ENCODE measurements at regions of chr17 and their contacts with region 1.

Region 1: GRCh38 chr17:49910094-49910857 is 58.7 kb upstream of the DLX4 start:
- DNase-seq: no peak
- ATAC-seq: peak; percentile 75
- H3K4me3 ChIP-seq: peak overlapping the region; percentile 38 to 46
- H3K27ac ChIP-seq: no peak overlapping the region
- H3K4me1 ChIP-seq: peaks cover 24% of the 10 kb centered on the region
- H3K27me3 ChIP-seq: 0 out of 2 replicates have a peak, but pooled peaks cover 2% of the 10 kb centered on the region
- CTCF ChIP-seq: no peak

Region 2: GRCh38 chr17:49966767-49967166 is 56.5 kb after region 1 on chr17:
- CTCF ChIA-PET with region 1: no interaction called
- POLR2A ChIA-PET with region 1: interaction called, 18 read pairs
- in situ Hi-C with region 1: no loop called
- intact Hi-C with region 1: no loop called
- DNase-seq: no peak
- ATAC-seq: no peak
- H3K4me3 ChIP-seq: no peak overlapping the region
- H3K27ac ChIP-seq: no peak overlapping the region
- H3K4me1 ChIP-seq: peaks cover 16% of the 10 kb centered on the region
- H3K27me3 ChIP-seq: peaks cover 15% of the 10 kb centered on the region
- CTCF ChIP-seq: no peak

Region 3: GRCh38 chr17:50055426-50056230 is 145.4 kb after region 1 on chr17 and contains the start of gene ITGA3:
- CTCF ChIA-PET with region 1: no interaction called
- POLR2A ChIA-PET with region 1: no interaction called
- in situ Hi-C with region 1: no loop called
- intact Hi-C with region 1: no loop called
- DNase-seq: no peak
- ATAC-seq: peak; percentile 69
- H3K4me3 ChIP-seq: peak within 1 kb of the TSS; percentile 63 to 99
- H3K27ac ChIP-seq: peak within 1 kb of the TSS; percentile 99
- H3K4me1 ChIP-seq: peaks cover 69% of the 10 kb centered on the region
- H3K27me3 ChIP-seq: no peaks in the 10 kb centered on the region
- CTCF ChIP-seq: no peak
- total RNA-seq, gene ITGA3: 439 TPM

Measured in Panc1 (cell line).